ENCODE measurements at regions of chr4 and their contacts with region 1.

Region 1: DNA sequence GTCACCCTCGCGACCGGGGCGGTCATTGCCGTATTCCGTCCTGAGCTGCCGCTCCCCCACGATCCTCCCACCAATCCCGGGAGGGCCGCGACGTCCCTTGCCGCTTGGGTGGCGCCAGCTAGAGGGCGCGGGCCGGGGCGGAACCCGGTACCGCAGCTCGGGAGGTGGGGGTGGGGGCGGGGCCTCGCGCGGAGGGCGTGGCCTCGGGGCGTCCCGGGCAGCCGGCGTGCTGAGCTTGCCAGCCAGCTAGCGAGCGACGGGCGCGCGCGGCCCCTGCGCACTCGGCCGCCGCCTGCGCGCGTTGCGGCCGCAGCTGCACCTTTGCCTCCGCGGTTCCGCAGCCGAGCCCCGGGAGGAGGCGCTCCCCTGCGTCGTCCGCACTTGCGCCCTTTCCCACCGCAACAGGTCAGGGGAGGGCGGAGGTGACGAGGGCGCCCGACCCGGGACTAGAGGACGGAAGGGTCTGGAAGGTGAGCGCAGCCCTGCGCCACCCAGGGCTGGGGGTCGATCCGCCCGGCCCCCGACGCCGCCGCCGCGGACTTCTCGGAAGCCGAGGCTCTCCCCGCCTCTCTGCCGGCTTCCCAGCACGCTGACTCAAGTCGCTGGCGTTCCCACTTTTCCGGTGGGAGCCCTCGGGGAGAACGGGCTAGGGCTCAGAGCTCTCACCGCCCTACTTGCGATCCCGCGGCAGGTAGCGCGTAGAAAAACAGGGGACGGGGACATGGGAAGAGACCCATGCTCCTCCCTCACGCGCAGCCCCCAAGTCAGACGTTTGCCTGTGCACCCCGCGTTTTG is at the start of gene AFF1:
- DNase-seq: peak; percentile 71 to 97
- H3K4me3 ChIP-seq: peak within 1 kb of the TSS; percentile 91 to 98
- H3K27ac ChIP-seq: peak within 1 kb of the TSS; percentile 94 to 99
- H3K4me1 ChIP-seq: peaks cover 5 to 21% of the 10 kb centered on the region in 2 donors
- H3K27me3 ChIP-seq: no peaks in the 10 kb centered on the region
- CTCF ChIP-seq: peak; percentile 23 to 52 (median 33)
- total RNA-seq, gene AFF1: 112 TPM

Region 2: DNA sequence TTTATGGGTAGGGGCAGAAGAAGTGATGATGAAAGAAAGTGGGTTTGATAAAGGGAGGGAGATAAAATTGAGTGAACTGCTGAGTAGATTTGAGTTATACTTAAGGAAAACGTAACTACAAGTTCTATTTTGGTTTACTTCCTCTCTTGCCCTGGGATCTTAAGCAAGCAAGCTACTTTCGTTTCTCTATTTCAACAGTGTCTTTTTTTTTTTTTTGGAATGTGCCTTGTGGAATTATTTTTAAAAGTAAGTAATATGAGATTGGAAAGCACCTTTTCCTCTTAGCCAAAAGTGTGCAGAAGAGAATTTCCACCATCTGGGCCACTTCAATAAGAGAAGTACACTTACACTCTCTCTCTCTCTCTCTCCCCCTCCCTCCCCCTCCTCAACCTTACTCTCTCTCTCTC is 26.7 kb before region 1 on chr4:
- intact Hi-C with region 1: no loop called
- DNase-seq: no peak
- H3K4me3 ChIP-seq: peak overlapping the region in 1 of 2 donors; percentile 30
- H3K27ac ChIP-seq: peak overlapping the region; percentile 43 to 68
- H3K4me1 ChIP-seq: peaks cover 3 to 11% of the 10 kb centered on the region in 2 donors
- H3K27me3 ChIP-seq: no peaks in the 10 kb centered on the region
- CTCF ChIP-seq: no peak

Region 3: GRCh38 chr4:87006676-87007527 is 71.9 kb after region 1 on chr4:
- intact Hi-C with region 1: loop called (anchors 1 kb)
- DNase-seq: peak; percentile 74 to 95
- H3K4me3 ChIP-seq: peak overlapping the region; percentile 52 to 81
- H3K27ac ChIP-seq: peak overlapping the region; percentile 89 to 99
- H3K4me1 ChIP-seq: peaks cover 0 to 21% of the 10 kb centered on the region in 2 donors
- H3K27me3 ChIP-seq: no peaks in the 10 kb centered on the region
- CTCF ChIP-seq: peak in 2 of 3 experiments; percentile 2 to 33

Region 4: DNA sequence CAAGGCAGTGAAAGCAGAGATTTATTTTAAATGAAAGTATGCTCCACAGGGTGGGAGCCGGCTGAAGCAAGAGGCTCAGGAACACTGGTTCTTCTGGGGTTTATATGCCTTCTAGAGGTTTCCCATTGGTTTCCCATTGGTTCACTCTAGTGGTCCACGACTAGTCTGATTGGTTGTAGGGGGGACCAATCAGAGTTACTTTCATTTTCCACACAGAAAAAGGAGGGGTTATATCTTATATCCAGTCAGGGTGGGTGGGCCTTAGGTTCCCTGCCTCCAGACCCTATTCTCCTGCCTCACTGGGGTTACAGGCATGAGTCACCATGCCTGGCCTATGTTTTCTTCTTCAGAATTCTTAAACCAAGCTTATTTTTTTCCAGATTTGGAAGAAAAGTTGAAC is 183.9 kb after region 1 on chr4:
- intact Hi-C with region 1: loop called (anchors 5 kb)
- DNase-seq: no peak
- H3K4me3 ChIP-seq: no peak overlapping the region
- H3K27ac ChIP-seq: peak overlapping the region in 1 of 2 donors; percentile 73
- H3K4me1 ChIP-seq: peaks cover 4 to 43% of the 10 kb centered on the region in 2 donors
- H3K27me3 ChIP-seq: no peaks in the 10 kb centered on the region
- CTCF ChIP-seq: no peak

Region 5: DNA sequence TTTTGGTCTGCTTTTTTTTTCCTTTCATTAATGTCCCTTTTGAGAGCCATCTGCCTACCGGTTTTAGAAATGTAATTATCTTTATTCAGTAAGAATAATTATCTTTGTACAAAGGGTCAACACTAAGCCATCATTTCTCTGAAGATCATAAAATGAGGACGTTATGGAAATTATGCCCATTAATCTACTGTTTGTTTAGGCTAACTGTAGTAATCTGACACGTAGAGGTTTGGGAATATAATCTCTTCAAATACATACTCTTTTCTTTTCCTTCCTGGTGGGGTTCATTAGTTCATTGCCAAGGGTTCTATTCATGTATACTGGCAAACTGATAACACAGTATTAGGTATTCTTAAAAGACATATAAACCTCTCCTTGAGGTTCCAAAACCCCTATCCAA is 391.5 kb after region 1 on chr4:
- intact Hi-C with region 1: no loop called
- DNase-seq: no peak
- H3K4me3 ChIP-seq: no peak overlapping the region
- H3K27ac ChIP-seq: no peak overlapping the region
- H3K4me1 ChIP-seq: no peaks in the 10 kb centered on the region
- H3K27me3 ChIP-seq: no peaks in the 10 kb centered on the region
- CTCF ChIP-seq: no peak

Region 6: DNA sequence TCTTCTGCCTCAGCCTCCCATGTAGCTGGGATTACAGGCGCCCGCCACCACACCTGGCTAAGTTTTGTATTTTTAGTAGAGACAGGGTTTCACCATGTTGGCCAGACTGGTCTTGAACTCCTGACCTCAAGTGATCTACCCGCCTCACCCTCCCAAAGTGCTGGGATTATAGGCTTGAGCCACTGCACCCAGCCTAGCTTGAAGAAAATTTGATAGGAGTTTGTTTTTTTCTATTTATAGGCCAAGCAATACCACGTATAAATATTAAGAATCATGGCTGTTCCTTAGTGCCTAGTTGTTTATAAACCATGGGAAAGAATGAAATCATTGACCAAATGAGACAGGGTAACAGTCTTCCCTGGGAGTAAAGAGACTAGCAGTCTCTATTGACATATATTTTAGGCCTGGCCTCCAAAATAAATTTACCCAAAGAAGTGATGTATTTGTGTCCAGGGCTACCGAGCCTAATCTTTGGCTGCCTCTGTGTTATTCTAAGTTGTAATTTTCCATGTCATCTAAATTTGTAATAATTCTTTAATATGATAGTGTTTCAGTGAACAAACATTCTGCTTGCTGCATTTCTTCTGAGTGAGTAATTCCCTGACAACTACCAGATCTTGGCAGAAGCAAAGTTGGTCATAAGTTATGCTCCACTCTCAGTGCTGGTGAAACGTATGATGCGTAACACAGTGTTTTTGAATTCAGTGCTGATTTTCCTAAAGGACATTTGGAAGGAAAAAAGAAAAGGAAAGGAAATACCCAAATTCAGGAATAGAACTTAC is 1082.7 kb after region 1 on chr4:
- intact Hi-C with region 1: loop called (anchors 10 kb)
- DNase-seq: peak in 1 of 2 donors; percentile 76
- H3K4me3 ChIP-seq: peak overlapping the region in 1 of 2 donors; percentile 45
- H3K27ac ChIP-seq: peak overlapping the region; percentile 94 to 98
- H3K4me1 ChIP-seq: peaks cover 4 to 63% of the 10 kb centered on the region in 2 donors
- H3K27me3 ChIP-seq: no peaks in the 10 kb centered on the region
- CTCF ChIP-seq: no peak

Region 7: DNA sequence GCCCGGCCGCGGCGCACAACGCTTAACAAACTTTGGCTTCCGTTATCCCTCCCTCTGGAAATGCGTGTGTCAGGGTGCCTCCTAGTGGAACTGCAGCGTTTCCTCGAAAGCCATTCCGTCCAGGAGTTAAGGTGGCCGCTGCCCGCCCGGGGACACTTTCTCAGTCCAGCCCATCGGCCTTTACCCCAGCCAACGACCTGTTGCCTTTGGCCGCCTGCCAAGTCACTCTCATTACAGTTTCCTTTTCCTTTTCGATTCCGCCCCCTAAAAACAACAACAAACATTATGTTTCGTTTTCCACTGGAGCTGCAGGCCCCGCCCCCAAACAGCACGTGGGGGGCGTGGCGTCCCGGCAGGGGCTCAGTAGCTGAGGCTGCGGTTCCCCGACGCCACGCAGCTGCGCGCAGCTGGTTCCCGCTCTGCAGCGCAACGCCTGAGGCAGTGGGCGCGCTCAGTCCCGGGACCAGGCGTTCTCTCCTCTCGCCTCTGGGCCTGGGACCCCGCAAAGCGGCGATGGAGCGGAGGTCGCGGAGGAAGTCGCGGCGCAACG is 1521.9 kb after region 1 on chr4 and contains the start of gene HERC5:
- intact Hi-C with region 1: loop called (anchors 10 kb)
- DNase-seq: peak; percentile 83 to 97
- H3K4me3 ChIP-seq: peak within 1 kb of the TSS; percentile 68 to 99
- H3K27ac ChIP-seq: peak within 1 kb of the TSS; percentile 83 to 98
- H3K4me1 ChIP-seq: peaks cover 3 to 12% of the 10 kb centered on the region in 2 donors
- H3K27me3 ChIP-seq: no peaks in the 10 kb centered on the region
- CTCF ChIP-seq: peak; percentile 54 to 76 (median 72)
- total RNA-seq, gene HERC5: 0.32 TPM

Measured in ascending aorta (tissue), 2 donors.